ENCODE measurements at regions of chr20 and their contacts with region 1.

Region 1: GRCh38 chr20:19583532-19584175 is 174.4 kb upstream of the RIN2 start:
- DNase-seq: peak; percentile 66
- ATAC-seq: no peak
- H3K4me3 Mint-ChIP-seq: no peak overlapping the region
- H3K27ac Mint-ChIP-seq: no peak overlapping the region
- H3K4me1 Mint-ChIP-seq: no peaks in the 10 kb centered on the region
- H3K27me3 Mint-ChIP-seq: no peaks in the 10 kb centered on the region

Region 2: GRCh38 chr20:19205977-19206396 is 377.7 kb before region 1 on chr20:
- CTCF ChIA-PET with region 1: interaction called, 16 read pairs
- DNase-seq: peak; percentile 71
- ATAC-seq: peak; percentile 47
- H3K4me3 Mint-ChIP-seq: no peak overlapping the region
- H3K27ac Mint-ChIP-seq: no peak overlapping the region
- H3K4me1 Mint-ChIP-seq: no peaks in the 10 kb centered on the region
- H3K27me3 Mint-ChIP-seq: peaks cover 14% of the 10 kb centered on the region

Region 3: DNA sequence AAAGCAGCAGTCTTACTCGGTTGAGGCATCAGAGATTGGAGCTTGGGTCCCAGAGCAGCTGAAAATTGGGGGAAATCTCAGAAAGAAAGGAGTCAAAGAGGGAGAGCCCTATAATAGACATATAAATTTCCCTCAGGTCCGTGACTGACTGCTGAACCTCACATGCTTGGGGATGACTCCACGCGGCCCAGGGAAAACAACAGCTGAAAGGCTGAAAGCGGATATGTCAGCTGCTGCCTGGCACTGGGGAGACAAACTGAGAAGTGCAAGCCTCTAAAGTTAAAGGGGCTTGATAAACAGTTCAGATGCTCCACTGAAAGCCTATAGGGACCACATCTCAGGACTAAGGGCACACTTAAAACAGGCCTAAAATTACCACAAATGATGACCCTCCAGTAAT is 81.5 kb before region 1 on chr20:
- CTCF ChIA-PET with region 1: no interaction called
- DNase-seq: no peak
- ATAC-seq: no peak
- H3K4me3 Mint-ChIP-seq: no peak overlapping the region
- H3K27ac Mint-ChIP-seq: no peak overlapping the region
- H3K4me1 Mint-ChIP-seq: peaks cover 2% of the 10 kb centered on the region
- H3K27me3 Mint-ChIP-seq: no peaks in the 10 kb centered on the region